Right ventricle myocardium inferior (tissue), 1 donor: ENCODE measurements at regions of chr3 and their contacts with region 1.

Region 1: GRCh38 chr3:172710664-172711453 is at the start of gene NCEH1:
- DNase-seq: peak; percentile 94
- ATAC-seq: peak; percentile 99
- total RNA-seq, gene NCEH1: 60.4 TPM

Region 2: DNA sequence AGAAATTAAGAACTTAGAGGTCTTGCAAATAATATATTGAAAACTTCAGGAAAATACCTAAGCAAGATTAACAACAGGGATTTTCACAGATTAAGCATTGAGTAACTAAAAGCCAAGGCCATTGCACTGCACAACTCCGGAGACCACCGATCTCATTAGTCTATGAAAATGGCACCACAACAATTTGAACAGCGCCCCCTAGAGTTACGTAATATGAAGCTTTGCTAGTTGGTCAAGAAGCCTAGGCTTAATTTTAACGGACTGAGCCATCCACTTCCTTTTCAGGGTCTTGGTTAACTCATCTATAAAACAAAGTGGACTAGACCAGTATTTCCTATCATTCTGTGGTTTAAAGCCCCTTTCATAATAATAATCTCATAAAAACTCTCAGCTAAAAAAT is 842.9 kb before region 1 on chr3:
- intact Hi-C with region 1: no loop called
- DNase-seq: no peak
- ATAC-seq: no peak

Region 3: GRCh38 chr3:172750368-172751174 is 39.7 kb after region 1 on chr3 and contains the start of gene ECT2:
- intact Hi-C with region 1: loop called (anchors 2 kb)
- DNase-seq: peak; percentile 100
- ATAC-seq: peak; percentile 99
- total RNA-seq, gene ECT2: 6.3 TPM